Activated B cell treated with CpG ODN at 0.5 μM for 24 hours (primary cell): ENCODE measurements at regions of chrX and their contacts with region 1.

Region 1: DNA sequence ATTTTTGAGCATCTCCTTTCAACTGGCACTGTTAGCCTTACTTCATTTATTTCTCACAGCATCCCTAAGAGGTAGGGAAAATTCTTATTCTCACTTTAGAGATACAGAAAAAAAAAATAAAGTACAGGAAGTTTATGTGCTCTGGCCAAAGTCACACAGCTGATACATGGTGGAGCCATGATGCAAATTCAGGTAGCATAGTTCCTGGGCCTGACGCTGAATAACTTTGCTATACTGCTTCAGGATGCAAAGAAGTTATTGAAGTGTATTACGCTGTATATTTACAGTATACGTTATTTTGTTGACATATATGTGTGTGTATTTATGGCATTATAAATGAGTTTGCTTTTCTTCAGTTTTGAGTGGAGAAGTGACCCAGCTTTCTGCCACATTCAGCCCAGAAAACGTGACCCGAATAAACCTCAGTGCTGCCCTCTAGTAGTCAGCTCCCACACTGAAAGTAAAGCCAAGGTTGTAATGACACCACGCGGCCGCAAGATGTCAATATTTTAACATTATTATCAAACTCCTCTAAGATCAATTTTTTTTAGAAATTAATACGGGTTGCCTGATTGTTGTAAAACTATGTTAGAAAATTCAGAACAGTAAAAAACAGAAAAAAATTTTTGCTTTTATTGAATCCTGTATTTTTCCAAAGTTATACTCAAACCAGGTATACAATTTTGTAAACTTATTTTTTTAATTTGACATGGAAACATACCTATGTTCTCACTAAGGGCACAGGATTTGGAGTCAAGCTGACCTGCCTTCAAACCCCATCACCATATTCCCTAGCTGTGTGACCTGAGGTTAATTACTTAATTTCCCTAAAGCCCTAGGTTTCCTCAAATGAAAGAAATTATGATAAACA is 3.8 kb upstream of the GUCY2F start:
- DNase-seq: no peak
- ATAC-seq: peak; percentile 85
- H3K4me3 Mint-ChIP-seq: no peak overlapping the region
- H3K27ac Mint-ChIP-seq: no peak overlapping the region
- H3K4me1 Mint-ChIP-seq: peaks cover 8% of the 10 kb centered on the region
- H3K27me3 Mint-ChIP-seq: peaks cover 2% of the 10 kb centered on the region
- CTCF ChIP-seq: peak; percentile 38

Region 2: DNA sequence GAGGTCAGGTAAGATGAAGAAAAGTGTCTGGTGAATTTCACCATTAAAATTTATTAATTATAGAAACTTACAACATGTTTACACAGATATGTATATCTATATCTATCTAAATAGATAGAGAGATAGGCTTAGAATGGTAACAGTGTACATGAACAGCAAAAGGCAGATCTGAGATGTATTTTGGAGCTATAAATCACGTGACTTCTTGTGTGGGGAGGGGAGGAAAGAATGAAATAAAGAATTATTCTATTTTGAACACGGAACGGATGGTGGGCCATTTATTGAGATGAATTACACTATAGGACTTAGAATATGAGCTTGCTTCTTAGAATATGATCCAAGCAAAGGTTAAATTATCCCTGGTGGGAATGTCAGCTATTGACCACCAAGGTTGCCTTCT is 73.7 kb before region 1 on chrX:
- CTCF ChIA-PET with region 1: no interaction called
- POLR2A ChIA-PET with region 1: no interaction called
- intact Hi-C with region 1: no loop called
- DNase-seq: no peak
- ATAC-seq: no peak
- H3K4me3 Mint-ChIP-seq: no peak overlapping the region
- H3K27ac Mint-ChIP-seq: no peak overlapping the region
- H3K4me1 Mint-ChIP-seq: no peaks in the 10 kb centered on the region
- H3K27me3 Mint-ChIP-seq: peaks cover 4% of the 10 kb centered on the region
- CTCF ChIP-seq: no peak

Region 3: DNA sequence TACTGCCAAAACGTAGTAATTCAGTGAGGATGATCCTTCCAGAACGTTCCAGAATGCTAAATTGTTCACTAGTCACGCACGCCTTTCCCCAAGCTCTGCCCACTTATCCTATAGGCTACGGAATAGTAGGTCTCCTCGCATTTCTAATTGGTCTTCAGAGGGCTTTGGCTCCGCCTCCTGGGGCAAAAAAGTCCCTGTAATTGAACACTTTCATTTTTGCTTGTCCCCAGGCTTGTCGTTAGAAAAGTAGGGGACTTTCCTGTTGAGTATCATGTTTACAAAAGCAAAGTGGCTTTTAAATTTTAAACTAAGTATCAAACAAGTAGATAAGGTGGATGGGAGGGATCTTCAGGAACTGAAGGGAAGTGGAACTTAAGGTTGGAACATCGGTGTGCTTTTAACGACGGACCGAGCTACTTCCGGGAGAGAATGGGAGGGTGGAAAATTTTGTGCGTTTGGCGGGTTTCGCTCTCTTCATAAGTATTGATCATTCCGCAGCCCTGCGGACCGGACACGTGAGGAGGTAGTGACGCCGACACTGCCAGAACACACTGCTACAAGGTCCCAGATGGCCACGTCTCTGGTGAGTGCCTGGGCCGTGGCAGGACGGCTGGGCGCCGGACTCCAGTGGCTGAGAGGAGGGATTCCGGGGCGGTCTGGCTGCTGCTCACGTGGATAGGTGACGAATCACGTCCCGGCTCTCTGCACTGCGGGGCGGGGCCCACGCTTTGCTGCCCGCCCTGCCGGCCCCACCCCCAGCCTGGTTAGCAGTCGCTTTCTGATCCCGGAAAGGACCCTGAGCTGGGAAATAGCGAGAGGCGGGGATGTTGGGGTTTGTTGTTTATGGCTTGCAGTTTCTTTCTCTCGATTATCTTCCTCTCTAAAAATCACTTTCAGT is 51.0 kb after region 1 on chrX and contains the start of gene NXT2:
- CTCF ChIA-PET with region 1: interaction called, 3 read pairs
- POLR2A ChIA-PET with region 1: interaction called, 3 read pairs
- intact Hi-C with region 1: loop called (anchors 1 kb)
- DNase-seq: peak; percentile 69
- ATAC-seq: peak; percentile 98
- H3K4me3 Mint-ChIP-seq: peak within 1 kb of the TSS; percentile 94
- H3K27ac Mint-ChIP-seq: peak within 1 kb of the TSS; percentile 98
- H3K4me1 Mint-ChIP-seq: peaks cover 33% of the 10 kb centered on the region
- H3K27me3 Mint-ChIP-seq: no peaks in the 10 kb centered on the region
- CTCF ChIP-seq: no peak
- total RNA-seq, gene NXT2: 9.7 and 12.8 TPM in 2 replicates

Region 4: DNA sequence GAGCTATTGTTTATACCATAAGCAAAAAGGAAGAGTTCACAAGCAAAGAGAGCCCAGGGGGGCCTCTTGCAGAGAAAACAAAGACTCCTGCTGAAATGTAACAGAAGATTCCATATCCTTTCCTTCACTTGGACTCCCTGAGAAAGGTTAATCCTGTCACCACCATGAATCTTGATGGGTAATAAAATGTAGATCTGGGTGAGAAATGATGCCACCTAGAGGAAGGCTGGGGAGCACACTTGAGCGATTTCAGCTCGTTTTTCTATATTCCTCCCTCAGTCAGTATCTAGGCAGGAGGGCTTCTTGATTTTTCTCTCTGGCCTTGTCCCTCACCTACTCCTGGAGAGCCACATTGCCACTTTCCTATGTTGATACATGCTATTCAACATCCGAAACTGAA is 149.5 kb after region 1 on chrX:
- CTCF ChIA-PET with region 1: interaction called, 89 read pairs
- POLR2A ChIA-PET with region 1: no interaction called
- intact Hi-C with region 1: loop called (anchors 1 kb)
- DNase-seq: no peak
- ATAC-seq: no peak
- H3K4me3 Mint-ChIP-seq: no peak overlapping the region
- H3K27ac Mint-ChIP-seq: no peak overlapping the region
- H3K4me1 Mint-ChIP-seq: no peaks in the 10 kb centered on the region
- H3K27me3 Mint-ChIP-seq: no peaks in the 10 kb centered on the region
- CTCF ChIP-seq: no peak

Region 5: GRCh38 chrX:109709129-109709631 is 223.5 kb after region 1 on chrX:
- CTCF ChIA-PET with region 1: interaction called, 5 read pairs
- POLR2A ChIA-PET with region 1: no interaction called
- intact Hi-C with region 1: loop called (anchors 10 kb)
- DNase-seq: no peak
- ATAC-seq: peak; percentile 69
- H3K4me3 Mint-ChIP-seq: peak overlapping the region; percentile 60
- H3K27ac Mint-ChIP-seq: peak overlapping the region; percentile 67
- H3K4me1 Mint-ChIP-seq: peaks cover 55% of the 10 kb centered on the region
- H3K27me3 Mint-ChIP-seq: no peaks in the 10 kb centered on the region
- CTCF ChIP-seq: no peak

Region 6: GRCh38 chrX:109856974-109857373 is 371.3 kb after region 1 on chrX:
- CTCF ChIA-PET with region 1: interaction called, 9 read pairs
- POLR2A ChIA-PET with region 1: no interaction called
- intact Hi-C with region 1: loop called (anchors 1 kb)
- DNase-seq: no peak
- ATAC-seq: no peak
- H3K4me3 Mint-ChIP-seq: no peak overlapping the region
- H3K27ac Mint-ChIP-seq: no peak overlapping the region
- H3K4me1 Mint-ChIP-seq: peaks cover 7% of the 10 kb centered on the region
- H3K27me3 Mint-ChIP-seq: no peaks in the 10 kb centered on the region
- CTCF ChIP-seq: no peak

Region 7: DNA sequence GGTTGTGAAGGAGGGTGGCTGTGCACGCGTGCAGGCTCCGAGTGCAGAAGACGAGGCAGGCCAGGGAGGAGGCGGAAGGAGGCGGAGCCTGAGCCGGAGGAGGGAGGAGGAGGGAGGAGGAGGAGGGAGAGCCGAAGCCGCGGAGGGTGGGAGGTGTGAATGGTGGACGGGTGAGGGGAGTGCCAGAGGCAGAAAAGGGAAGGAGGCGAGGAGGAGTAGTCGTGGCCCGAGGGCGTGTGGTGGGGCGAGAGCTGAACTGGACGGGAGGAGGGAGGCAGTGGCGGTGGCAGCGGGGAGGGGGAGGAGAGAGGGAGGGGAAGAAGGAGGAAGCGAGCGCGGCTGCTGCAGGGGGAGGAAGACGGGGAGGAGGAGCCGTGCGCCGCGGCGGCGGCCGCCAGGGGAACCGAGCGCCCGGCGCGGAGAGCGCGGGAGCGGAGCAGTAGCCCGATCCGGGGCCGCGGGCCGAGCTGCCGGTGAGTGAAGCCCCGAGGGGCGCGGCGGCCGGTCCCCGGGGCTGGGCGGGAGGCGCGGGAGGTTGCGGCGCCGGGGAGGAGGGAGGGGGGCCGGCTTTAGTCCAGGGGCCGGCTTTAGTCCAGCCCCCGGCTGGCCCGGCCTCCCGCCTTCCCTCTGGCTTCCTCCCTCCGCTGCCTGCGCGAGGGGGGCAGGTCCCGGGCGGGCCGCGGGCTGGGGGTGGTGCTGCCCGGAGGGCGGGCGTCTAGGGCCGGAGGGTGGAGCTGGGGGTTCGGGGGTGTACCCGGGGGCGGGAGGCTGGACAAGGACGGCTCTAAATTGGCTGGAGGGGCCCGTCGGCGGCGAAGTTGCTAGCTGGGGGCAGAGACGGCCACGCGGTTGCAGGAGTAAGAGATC is 516.8 kb after region 1 on chrX and contains the start of gene TMEM164:
- CTCF ChIA-PET with region 1: no interaction called
- POLR2A ChIA-PET with region 1: no interaction called
- intact Hi-C with region 1: loop called (anchors 5 kb)
- DNase-seq: peak; percentile 71
- ATAC-seq: peak; percentile 74
- H3K4me3 Mint-ChIP-seq: peak within 1 kb of the TSS; percentile 87
- H3K27ac Mint-ChIP-seq: peak within 1 kb of the TSS; percentile 92
- H3K4me1 Mint-ChIP-seq: peaks cover 38% of the 10 kb centered on the region
- H3K27me3 Mint-ChIP-seq: no peaks in the 10 kb centered on the region
- CTCF ChIP-seq: no peak
- total RNA-seq, gene TMEM164: 20.4 and 21.8 TPM in 2 replicates

Region 8: DNA sequence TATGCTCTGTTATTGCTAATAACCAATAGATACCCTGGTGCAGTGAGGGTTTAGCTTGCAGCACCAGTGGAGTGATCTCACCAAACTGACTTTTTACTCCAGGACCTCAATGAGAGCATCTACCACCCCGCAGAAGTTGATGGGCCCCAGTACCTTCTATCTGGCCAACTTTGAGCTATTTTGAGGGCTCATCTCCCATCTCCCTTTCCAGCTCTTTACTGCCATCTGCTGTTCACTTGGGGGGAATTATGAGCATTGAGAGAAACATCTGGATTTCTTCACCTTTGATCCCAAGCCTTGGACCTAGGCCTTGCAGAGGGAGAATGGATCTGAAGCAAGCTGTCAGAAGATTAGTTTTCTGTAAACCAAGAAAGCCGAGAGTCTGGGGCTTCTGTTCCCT is 660.8 kb after region 1 on chrX:
- CTCF ChIA-PET with region 1: no interaction called
- POLR2A ChIA-PET with region 1: no interaction called
- intact Hi-C with region 1: loop called (anchors 10 kb)
- DNase-seq: no peak
- ATAC-seq: peak; percentile 47
- H3K4me3 Mint-ChIP-seq: no peak overlapping the region
- H3K27ac Mint-ChIP-seq: no peak overlapping the region
- H3K4me1 Mint-ChIP-seq: peaks cover 7% of the 10 kb centered on the region
- H3K27me3 Mint-ChIP-seq: no peaks in the 10 kb centered on the region
- CTCF ChIP-seq: no peak

Region 9: DNA sequence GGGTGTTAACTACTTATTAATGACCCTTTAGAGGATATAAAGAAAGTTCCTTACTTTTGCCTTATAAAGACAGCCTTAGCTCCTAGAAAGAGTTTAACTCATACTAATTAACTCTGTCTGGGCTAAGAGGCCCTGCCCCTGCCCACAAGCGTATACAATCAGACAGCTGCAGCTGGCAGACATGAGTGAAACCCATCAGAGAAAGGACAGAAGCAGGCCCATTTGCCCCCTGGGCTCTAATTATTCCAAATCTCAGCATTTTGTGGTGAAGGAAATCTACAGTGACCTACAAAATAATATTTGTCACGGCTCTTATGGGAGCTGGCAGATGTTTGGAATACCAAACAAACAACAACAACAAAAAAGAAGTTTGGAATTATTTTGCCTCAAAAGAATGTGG is 1238.1 kb after region 1 on chrX:
- CTCF ChIA-PET with region 1: no interaction called
- POLR2A ChIA-PET with region 1: no interaction called
- intact Hi-C with region 1: no loop called
- DNase-seq: no peak
- ATAC-seq: no peak
- H3K4me3 Mint-ChIP-seq: no peak overlapping the region
- H3K27ac Mint-ChIP-seq: no peak overlapping the region
- H3K4me1 Mint-ChIP-seq: no peaks in the 10 kb centered on the region
- H3K27me3 Mint-ChIP-seq: no peaks in the 10 kb centered on the region
- CTCF ChIP-seq: no peak